Activated CD4-positive, alpha-beta T cell treated with anti-CD3 and anti-CD28 coated beads, Interleukin-2, amount 10 ng/mL, durations not matched to agents 7 days and 5 days (primary cell): ENCODE measurements at regions of chr22 and their contacts with region 1.

Region 1: DNA sequence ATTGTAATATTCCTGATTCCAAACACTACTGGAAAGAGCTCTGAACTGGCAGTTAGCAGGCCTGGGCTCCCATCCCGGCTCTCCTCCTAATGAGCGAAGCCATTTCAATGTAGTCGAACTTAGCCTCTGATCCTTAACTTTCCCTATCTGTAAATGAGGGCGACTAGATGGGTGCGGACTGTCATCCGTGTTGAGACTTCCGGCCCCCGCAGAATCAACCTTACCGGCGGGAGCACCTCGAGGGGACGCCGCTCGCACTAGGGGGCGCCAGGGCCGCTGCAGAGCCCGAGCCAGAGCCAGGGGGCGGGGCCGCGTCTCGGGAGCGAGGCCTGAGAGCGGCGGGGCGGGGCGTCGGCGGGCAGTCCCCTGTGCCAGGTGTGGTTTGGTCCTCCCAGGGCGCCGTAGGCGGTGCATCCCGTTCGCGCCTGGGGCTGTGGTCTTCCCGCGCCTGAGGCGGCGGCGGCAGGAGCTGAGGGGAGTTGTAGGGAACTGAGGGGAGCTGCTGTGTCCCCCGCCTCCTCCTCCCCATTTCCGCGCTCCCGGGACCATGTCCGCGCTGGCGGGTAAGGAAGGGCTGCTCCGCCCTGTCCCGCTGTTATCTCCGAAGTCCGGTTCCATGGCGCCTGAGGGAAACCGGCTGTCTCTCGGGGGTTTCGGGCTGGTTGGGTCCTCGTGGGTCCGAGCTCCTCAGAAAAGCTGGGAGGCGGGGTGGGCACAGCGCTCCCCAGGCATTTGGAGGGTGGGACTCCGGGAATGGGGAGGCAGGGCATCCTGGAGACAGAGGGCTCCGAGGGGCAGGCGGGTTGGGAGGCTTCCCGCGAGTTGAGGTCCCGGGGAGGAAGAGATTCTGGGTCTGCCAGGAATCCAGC is at the start of gene LIMK2:
- DNase-seq: peak; percentile 96
- H3K4me3 Mint-ChIP-seq: peak within 1 kb of the TSS; percentile 90
- H3K27ac Mint-ChIP-seq: peak within 1 kb of the TSS; percentile 92
- H3K4me1 Mint-ChIP-seq: peaks cover 51% of the 10 kb centered on the region
- H3K27me3 Mint-ChIP-seq: no peaks in the 10 kb centered on the region
- total RNA-seq, gene LIMK2: 48.6 to 54.5 TPM

Region 2: DNA sequence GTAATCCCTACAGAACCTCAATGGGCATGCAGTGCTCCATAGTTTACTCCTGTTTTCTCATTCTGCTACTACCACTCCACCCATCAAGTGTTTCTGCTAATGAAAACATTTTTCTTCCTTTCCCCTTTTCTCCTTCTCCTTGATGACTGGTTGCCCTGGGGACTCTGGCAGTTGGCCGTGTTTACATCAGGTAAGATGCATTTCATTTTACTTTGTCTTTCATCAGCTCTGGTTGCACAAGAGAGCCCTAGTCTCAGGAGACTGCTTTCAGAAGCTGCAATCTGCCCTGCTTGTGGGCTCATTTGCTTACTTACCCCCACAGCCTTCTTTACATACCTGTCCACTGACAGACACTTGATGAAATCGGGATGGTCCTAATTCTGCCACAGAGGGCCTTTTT is 19.6 kb before region 1 on chr22:
- CTCF ChIA-PET with region 1: interaction called, 10 read pairs
- POLR2A ChIA-PET with region 1: no interaction called
- DNase-seq: no peak
- H3K4me3 Mint-ChIP-seq: no peak overlapping the region
- H3K27ac Mint-ChIP-seq: no peak overlapping the region
- H3K4me1 Mint-ChIP-seq: no peaks in the 10 kb centered on the region
- H3K27me3 Mint-ChIP-seq: no peaks in the 10 kb centered on the region

Region 3: DNA sequence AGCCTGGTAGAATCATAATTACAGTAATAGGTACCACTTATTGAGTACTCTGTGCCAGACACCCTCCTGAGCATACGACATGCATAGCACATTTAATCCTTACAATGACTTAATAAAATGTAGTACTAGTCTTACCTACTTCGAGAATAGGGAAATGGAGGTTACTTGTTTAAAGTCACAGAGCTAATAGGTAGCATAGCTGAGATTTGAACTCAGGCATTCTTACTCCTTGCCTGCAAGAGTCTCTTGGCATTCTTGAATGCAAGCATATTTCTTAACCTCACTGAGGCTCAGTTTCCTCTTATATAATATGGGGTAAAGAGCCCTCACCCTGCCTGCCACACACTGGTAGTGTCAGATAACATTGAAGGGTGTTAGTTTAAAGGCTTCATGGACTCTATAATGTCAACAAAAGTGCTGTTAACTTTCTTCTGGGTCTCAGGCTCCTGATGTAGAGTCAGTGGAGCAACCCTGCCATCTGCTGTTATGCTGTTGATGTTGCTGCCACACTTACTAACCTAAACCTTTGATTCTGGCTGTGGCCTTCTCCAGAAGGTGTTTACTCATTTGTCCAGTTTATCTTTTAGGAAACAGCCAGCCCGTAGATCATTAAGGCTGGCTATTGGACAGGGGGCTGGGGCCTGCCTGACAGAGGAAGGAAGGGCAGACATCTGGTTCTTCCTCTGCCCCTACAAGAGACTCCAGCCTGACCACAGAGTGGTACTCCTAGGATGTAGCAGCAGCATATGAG is 18.9 kb after region 1 on chr22:
- CTCF ChIA-PET with region 1: interaction called, 110 read pairs
- POLR2A ChIA-PET with region 1: interaction called, 4 read pairs
- DNase-seq: peak; percentile 67
- H3K4me3 Mint-ChIP-seq: no peak overlapping the region
- H3K27ac Mint-ChIP-seq: peak overlapping the region; percentile 93
- H3K4me1 Mint-ChIP-seq: peaks cover 59% of the 10 kb centered on the region
- H3K27me3 Mint-ChIP-seq: no peaks in the 10 kb centered on the region

Region 4: DNA sequence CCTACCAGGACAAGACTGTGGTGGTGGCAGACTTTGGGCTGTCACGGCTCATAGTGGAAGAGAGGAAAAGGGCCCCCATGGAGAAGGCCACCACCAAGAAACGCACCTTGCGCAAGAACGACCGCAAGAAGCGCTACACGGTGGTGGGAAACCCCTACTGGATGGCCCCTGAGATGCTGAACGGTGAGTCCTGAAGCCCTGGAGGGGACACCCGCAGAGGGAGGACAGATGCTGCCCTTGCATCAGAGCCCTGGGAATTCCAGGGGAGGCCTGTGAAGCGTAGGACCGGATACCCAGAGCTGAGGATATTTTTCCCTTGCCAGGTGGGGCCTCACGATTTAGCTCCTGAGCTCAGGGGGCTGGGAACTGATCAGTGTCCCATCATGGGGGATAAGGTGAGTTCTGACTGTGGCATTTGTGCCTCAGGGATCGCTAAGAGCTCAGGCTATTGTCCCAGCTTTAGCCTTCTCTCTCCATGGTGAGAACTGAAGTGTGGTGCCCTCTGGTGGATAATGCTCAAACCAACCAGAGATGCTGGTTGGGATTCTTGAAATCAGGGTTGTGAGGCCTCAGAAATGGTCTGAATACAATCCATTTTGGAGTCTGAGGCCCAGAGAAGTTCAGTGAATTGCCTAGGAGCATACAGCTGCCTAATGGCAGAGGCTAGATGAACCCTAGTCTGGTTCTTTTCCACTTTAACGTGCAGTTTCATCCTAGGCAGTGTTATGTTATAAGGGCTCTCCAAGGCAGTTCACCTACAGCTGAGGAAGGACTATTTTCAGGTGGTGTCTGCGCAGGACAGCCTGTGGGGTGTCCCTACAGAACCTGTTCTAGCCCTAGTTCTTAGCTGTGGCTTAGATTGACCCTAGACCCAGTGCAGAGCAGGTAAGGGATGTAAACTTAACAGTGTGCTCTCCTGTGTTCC is 60.7 kb after region 1 on chr22:
- CTCF ChIA-PET with region 1: interaction called, 13 read pairs
- POLR2A ChIA-PET with region 1: no interaction called
- DNase-seq: peak; percentile 66
- H3K4me3 Mint-ChIP-seq: no peak overlapping the region
- H3K27ac Mint-ChIP-seq: peak overlapping the region; percentile 13
- H3K4me1 Mint-ChIP-seq: peaks cover 41% of the 10 kb centered on the region
- H3K27me3 Mint-ChIP-seq: no peaks in the 10 kb centered on the region

Region 5: DNA sequence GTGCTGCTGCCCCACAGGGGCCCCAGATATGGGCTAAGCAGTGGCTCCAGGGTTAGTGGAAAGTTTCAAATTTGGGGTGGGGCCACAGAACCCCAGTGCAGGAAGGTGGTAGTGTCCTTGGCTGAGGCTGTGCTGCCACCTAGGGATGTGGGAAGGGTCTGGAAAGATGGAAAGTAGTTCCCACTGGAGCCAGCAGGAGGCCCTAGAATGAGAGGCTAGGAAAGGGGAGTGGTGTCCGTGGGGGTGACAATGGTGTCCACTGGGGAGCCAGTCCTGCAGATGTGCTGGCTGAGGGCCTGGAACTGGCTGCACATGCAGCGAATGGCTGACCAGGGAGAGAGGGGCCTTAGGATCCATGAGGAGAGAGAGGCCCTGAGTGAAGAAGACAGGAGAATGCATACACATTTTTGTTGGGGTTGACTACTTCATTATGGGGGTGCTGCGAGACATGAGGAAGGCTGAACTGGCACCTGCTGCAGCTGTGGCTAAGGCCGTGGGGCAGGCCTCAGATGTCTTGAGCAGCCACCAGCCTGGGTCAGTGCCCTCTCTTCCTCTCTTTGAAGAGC is 1166.7 kb after region 1 on chr22:
- CTCF ChIA-PET with region 1: no interaction called
- POLR2A ChIA-PET with region 1: no interaction called
- DNase-seq: peak; percentile 11
- H3K4me3 Mint-ChIP-seq: no peak overlapping the region
- H3K27ac Mint-ChIP-seq: no peak overlapping the region
- H3K4me1 Mint-ChIP-seq: no peaks in the 10 kb centered on the region
- H3K27me3 Mint-ChIP-seq: no peaks in the 10 kb centered on the region